ENCODE measurements at regions of chr16 and their contacts with region 1.

Region 1: GRCh38 chr16:30445408-30446202 is at the start of gene SEPHS2:
- DNase-seq: peak; percentile 83 to 99 (median 94)
- ATAC-seq: peak; percentile 97
- H3K4me3 Mint-ChIP-seq: peak within 1 kb of the TSS; percentile 86 to 98 (median 96)
- H3K27ac Mint-ChIP-seq: peak within 1 kb of the TSS; percentile 95 to 99 (median 97)
- H3K4me1 Mint-ChIP-seq: peaks cover 13 to 49% (median 43%) of the 10 kb centered on the region in 4 donors
- H3K27me3 Mint-ChIP-seq: no peaks in the 10 kb centered on the region
- polyA plus RNA-seq, gene SEPHS2: 45.5 to 60.7 (median 55.0) TPM

Region 2: DNA sequence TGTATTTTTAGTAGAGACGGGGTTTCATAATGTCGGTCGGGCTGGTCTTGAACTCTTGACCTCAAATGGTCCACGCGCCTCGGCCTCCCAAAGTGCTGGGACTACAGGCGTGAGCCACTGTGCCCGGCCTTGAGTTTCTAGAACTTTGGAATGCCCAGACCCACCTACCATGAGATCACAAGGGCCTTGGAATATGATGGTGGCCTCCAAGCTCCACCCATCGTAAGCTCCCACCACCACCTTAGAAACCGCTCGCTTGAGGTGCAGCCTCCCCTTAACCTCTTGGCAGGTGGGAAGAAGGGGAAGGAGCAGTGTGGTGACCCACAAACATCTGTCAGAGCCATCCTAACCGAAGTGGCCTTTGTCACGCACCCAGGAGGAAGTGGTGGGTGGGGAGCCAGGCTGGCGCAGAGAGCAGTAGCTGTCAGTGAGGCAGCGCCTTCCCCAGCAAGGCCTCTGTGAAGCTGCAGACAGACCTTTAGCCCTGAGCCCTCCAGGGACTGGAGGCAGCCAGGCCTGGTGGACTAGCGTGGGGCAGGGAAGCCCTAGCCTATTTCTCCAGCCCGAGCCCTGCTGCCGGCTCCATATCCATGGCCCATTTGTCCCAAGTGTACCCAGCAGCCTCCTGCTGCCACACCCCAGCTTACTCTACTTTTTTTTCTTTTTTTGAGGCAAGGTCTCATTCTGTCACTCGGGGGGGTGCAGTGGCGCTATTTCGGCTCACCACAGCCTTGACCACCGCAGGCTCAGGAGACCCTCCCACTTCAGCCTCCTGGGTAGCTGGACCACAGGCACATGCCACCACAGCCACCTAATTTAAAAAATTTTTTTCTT is 13.2 kb after region 1 on chr16:
- POLR2A ChIA-PET with region 1: interaction called, 10 read pairs
- DNase-seq: peak; percentile 30 to 85 (median 63)
- ATAC-seq: peak; percentile 96 to 98
- H3K4me3 Mint-ChIP-seq: peak overlapping the region; percentile 48 to 78 (median 68)
- H3K27ac Mint-ChIP-seq: peak overlapping the region; percentile 68 to 93 (median 88)
- H3K4me1 Mint-ChIP-seq: peaks cover 18 to 52% (median 48%) of the 10 kb centered on the region in 4 donors
- H3K27me3 Mint-ChIP-seq: no peaks in the 10 kb centered on the region

Region 3: DNA sequence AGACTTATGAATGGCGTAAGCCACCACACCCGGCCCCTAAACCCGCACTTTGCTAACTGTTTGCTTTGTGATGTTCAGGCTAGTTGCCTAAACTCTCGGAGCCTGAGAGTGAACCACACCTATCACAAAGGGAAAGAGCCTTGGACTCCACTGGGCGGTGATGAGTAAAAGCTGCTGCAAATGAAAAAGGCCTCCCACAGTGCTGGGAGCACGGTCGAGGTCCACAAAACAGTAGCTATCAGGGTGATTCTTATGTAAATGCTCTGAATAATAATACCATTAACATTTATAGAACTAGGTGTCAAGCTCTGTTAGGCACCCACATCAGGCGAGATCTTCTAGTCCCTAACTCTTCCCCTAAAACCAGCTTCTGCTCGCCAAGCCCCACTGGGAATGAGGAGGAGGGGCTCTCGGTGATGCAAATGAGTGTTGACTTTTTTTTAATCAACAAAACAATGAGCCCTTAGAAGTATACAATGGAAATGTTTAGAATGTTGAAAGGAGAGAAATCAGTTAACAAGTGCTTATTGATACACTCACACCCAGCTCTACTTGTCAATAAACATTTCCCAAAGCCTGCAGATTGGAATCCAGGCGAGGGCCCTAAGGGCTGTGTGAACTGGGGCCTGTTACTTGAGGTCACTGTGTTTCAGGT is 232.5 kb after region 1 on chr16:
- POLR2A ChIA-PET with region 1: no interaction called
- DNase-seq: no peak
- ATAC-seq: no peak
- H3K4me3 Mint-ChIP-seq: no peak overlapping the region
- H3K27ac Mint-ChIP-seq: no peak overlapping the region
- H3K4me1 Mint-ChIP-seq: no peaks in the 10 kb centered on the region
- H3K27me3 Mint-ChIP-seq: no peaks in the 10 kb centered on the region

Measured in naive thymus-derived CD8-positive, alpha-beta T cell (primary cell).